ENCODE measurements at regions of chr16 and their contacts with region 1.

Region 1: DNA sequence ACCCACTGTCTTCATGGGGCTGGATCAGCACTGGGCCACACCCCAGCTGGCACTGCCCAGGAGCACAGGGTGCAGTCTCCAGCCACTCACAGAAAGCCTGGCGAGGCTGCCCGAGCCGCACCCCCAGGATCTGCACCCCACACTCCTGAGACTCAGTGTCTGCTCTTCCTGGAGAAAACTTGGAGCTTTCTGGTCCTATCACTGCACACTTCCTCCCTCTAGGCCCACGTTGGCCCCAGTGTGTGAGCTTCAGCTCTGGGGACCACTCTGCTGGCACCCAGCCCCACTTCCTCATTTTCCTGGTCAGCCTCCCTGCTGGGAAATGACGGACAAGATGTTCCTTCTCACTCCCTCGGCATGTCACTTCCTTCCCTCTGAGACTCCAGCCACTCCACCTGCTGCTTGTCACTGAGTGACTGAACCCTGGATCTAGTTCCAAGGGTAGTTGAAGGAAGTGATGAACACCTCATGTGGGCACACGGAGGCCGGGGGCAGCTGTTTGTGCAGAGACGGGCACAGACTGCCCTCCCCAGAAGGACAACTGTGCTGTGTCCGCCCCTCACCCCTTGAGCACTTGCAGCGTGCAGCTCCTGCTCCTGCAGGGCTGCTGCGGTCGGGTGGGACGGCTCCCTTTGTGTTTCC is 29.0 kb downstream of the ZC3H18 start:
- DNase-seq: peak; percentile 93
- ATAC-seq: peak; percentile 80

Region 2: DNA sequence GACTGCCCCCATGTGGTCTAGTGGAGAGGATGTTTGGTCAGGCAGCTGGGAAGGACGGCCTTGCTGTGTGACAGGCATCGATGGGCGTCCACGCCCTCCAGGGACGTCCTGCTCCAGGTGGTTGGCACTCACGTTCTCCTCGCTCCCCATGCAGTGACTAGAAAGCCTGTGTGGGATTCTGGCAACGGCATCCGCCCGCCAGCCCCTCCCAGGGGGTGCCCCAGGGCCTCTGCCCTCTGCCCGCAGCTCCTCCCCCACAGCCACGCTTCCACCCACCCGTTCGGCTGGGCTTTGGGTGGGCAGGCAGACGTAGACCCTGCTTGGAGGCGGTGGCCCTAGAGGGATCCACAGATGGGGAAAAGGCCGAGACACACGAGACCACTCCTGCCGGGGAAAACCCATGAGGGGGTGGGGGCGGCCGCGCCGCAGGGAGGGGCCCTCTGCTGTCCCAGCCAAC is 34.5 kb after region 1 on chr16:
- intact Hi-C with region 1: no loop called
- DNase-seq: no peak
- ATAC-seq: no peak

Region 3: GRCh38 chr16:88706288-88706964 is 107.2 kb after region 1 on chr16 and contains the starts of genes CTU2 and RNF166:
- intact Hi-C with region 1: loop called (anchors 5 kb)
- DNase-seq: peak; percentile 96
- ATAC-seq: peak; percentile 94
- total RNA-seq, gene CTU2: 13.1 TPM
- total RNA-seq, gene RNF166: 17.0 TPM